GM10248 (cell line): ENCODE measurements at regions of chr3 and their contacts with region 1.

Region 1: GRCh38 chr3:189276481-189277219 is 104.9 kb downstream of the TPRG1 start:
- DNase-seq: no peak
- CTCF ChIP-seq: no peak

Region 2: DNA sequence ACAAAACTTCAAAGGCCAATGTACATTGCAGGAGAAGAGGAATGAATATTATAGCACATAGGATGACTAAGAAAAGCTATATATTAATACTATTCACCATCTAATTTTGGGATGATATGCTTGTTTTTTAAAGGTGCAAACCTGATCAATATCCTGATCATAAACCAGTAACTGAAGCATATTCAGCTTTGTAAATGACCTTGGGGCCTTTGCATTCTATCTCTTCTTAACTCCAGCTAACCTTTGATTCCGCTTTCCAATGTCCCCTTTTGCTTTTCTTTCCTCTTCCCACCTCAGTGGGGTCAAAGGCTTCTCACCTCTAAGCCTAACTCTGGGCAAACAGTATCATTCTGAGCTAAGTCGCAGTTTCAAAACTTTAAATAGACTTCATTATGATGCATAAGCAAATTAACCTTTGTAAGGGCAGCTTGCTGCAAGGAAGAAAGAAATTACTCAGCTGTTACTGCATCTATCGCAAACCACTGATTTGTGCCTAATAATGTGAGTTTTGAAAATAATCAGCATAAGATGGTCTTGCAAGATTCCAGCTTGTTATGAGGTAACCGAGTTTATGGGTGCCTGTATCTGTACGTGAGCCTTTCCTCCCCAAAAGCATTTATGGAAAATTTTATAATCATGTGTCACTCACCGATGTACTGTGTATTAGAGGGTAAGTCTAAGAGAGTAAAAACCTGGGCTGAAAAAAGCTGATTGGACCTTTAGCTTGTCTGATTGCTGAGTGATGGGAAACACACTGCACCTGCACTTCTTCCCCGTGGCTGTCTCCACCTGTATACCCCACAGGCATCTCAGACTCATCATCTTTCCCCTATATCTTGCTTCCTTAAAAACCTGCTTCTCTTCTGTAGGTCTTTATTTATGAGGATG is 11.9 kb after region 1 on chr3:
- CTCF ChIA-PET with region 1: interaction called, 10 read pairs
- POLR2A ChIA-PET with region 1: interaction called, 3 read pairs
- DNase-seq: peak; percentile 53
- CTCF ChIP-seq: no peak

Region 3: GRCh38 chr3:189486556-189486955 is 209.9 kb after region 1 on chr3:
- CTCF ChIA-PET with region 1: no interaction called
- POLR2A ChIA-PET with region 1: no interaction called
- DNase-seq: no peak
- CTCF ChIP-seq: no peak